MCF 10A (cell line): ENCODE measurements at regions of chr4 and their contacts with region 1.

Region 1: GRCh38 chr4:159102622-159103383 is at the start of gene RAPGEF2:
- DNase-seq: peak; percentile 97
- H3K4me3 Mint-ChIP-seq: peak within 1 kb of the TSS; percentile 93
- H3K27ac Mint-ChIP-seq: peak within 1 kb of the TSS; percentile 89
- H3K4me1 Mint-ChIP-seq: peaks cover 28% of the 10 kb centered on the region
- H3K27me3 Mint-ChIP-seq: no peaks in the 10 kb centered on the region
- CTCF ChIP-seq: no peak
- total RNA-seq, gene RAPGEF2: 26.3 and 27.4 TPM in 2 replicates

Region 2: GRCh38 chr4:158722917-158723793 is 379.6 kb before region 1 on chr4 and contains the start of gene PPID:
- CTCF ChIA-PET with region 1: no interaction called
- POLR2A ChIA-PET with region 1: interaction called, 6 read pairs
- intact Hi-C with region 1: loop called (anchors 2 kb)
- DNase-seq: peak; percentile 82
- H3K4me3 Mint-ChIP-seq: peak within 1 kb of the TSS; percentile 100
- H3K27ac Mint-ChIP-seq: peak within 1 kb of the TSS; percentile 97
- H3K4me1 Mint-ChIP-seq: peaks cover 7% of the 10 kb centered on the region
- H3K27me3 Mint-ChIP-seq: peaks cover 17% of the 10 kb centered on the region
- CTCF ChIP-seq: no peak
- total RNA-seq, gene PPID: 29.2 and 36.6 TPM in 2 replicates

Region 3: GRCh38 chr4:158873795-158874401 is 228.9 kb before region 1 on chr4:
- CTCF ChIA-PET with region 1: no interaction called
- POLR2A ChIA-PET with region 1: no interaction called
- intact Hi-C with region 1: loop called (anchors 5 kb)
- DNase-seq: peak; percentile 50
- H3K4me3 Mint-ChIP-seq: no peak overlapping the region
- H3K27ac Mint-ChIP-seq: peak overlapping the region; percentile 61
- H3K4me1 Mint-ChIP-seq: peaks cover 10% of the 10 kb centered on the region
- H3K27me3 Mint-ChIP-seq: no peaks in the 10 kb centered on the region
- CTCF ChIP-seq: no peak

Region 4: GRCh38 chr4:158938220-158939044 is 164.4 kb before region 1 on chr4:
- CTCF ChIA-PET with region 1: no interaction called
- POLR2A ChIA-PET with region 1: no interaction called
- intact Hi-C with region 1: no loop called
- DNase-seq: no peak
- H3K4me3 Mint-ChIP-seq: no peak overlapping the region
- H3K27ac Mint-ChIP-seq: no peak overlapping the region
- H3K4me1 Mint-ChIP-seq: no peaks in the 10 kb centered on the region
- H3K27me3 Mint-ChIP-seq: no peaks in the 10 kb centered on the region
- CTCF ChIP-seq: no peak

Region 5: GRCh38 chr4:158996669-158997074 is 106.1 kb before region 1 on chr4:
- CTCF ChIA-PET with region 1: interaction called, 4 read pairs
- POLR2A ChIA-PET with region 1: interaction called, 10 read pairs
- intact Hi-C with region 1: loop called (anchors 2 kb)
- DNase-seq: peak; percentile 97
- H3K4me3 Mint-ChIP-seq: no peak overlapping the region
- H3K27ac Mint-ChIP-seq: peak overlapping the region; percentile 63
- H3K4me1 Mint-ChIP-seq: peaks cover 17% of the 10 kb centered on the region
- H3K27me3 Mint-ChIP-seq: no peaks in the 10 kb centered on the region
- CTCF ChIP-seq: no peak

Region 6: DNA sequence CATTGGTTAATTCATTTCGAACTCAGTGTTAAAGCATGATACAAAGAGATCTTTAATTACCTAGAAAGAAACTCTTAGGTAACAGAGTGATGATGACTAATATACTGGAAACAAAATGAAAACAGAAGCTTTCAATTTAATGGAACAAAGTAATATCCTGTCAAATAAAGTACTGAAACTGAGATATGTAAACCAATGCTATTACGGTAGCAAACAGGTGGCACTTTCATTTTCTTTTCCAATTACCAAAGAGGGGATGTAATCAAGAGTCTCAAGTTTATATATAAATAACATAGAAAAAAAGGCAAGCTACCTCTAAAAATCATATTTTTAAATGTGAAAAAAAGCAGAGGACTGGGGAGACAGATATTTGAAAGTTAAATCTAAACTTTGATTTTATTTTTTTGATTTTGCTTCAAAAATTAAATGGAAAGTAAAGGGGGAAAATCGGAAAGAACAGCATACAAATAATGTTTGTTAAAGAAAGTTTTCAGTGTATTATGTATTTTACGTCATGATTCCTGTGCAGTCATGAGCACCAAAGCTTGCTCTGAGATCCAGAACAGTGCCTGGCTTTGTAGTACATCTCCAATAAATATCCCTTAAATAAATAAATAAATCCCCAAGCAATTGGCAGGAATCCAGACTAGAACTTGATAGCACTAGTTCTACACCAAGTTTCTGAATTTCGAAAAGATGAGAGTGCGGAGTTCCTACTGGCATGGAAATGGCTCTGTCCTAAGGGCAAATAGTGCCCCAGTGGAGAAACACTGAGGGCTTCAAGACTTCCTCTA is 24.9 kb before region 1 on chr4:
- CTCF ChIA-PET with region 1: interaction called, 3 read pairs
- POLR2A ChIA-PET with region 1: interaction called, 19 read pairs
- intact Hi-C with region 1: no loop called
- DNase-seq: peak; percentile 82
- H3K4me3 Mint-ChIP-seq: peak overlapping the region; percentile 56
- H3K27ac Mint-ChIP-seq: no peak overlapping the region
- H3K4me1 Mint-ChIP-seq: peaks cover 6% of the 10 kb centered on the region
- H3K27me3 Mint-ChIP-seq: no peaks in the 10 kb centered on the region
- CTCF ChIP-seq: no peak

Region 7: DNA sequence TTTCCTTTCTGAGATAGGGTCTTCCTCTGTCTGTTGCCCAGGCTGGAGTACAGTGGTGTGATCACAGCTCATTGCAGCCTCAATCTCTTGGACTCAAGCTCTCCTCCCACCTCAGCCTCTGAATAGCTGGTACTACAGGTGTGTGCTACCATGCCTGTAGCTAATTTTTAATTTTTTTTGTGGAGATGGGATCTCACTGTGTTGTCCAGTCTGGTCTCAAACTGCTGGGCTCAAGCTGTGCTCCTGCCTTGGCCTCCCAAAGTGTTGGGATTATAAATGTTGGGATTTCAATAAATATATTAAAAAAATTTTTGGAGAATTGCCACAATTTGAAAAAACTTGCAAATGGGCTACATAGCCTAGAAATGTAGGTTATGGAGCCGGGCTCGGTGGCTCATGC is 18.6 kb after region 1 on chr4:
- CTCF ChIA-PET with region 1: interaction called, 4 read pairs
- POLR2A ChIA-PET with region 1: interaction called, 12 read pairs
- intact Hi-C with region 1: no loop called
- DNase-seq: no peak
- H3K4me3 Mint-ChIP-seq: no peak overlapping the region
- H3K27ac Mint-ChIP-seq: no peak overlapping the region
- H3K4me1 Mint-ChIP-seq: no peaks in the 10 kb centered on the region
- H3K27me3 Mint-ChIP-seq: no peaks in the 10 kb centered on the region
- CTCF ChIP-seq: no peak